Sigmoid colon (tissue), 7 donors: ENCODE measurements at regions of chr6 and their contacts with region 1.

Region 1: DNA sequence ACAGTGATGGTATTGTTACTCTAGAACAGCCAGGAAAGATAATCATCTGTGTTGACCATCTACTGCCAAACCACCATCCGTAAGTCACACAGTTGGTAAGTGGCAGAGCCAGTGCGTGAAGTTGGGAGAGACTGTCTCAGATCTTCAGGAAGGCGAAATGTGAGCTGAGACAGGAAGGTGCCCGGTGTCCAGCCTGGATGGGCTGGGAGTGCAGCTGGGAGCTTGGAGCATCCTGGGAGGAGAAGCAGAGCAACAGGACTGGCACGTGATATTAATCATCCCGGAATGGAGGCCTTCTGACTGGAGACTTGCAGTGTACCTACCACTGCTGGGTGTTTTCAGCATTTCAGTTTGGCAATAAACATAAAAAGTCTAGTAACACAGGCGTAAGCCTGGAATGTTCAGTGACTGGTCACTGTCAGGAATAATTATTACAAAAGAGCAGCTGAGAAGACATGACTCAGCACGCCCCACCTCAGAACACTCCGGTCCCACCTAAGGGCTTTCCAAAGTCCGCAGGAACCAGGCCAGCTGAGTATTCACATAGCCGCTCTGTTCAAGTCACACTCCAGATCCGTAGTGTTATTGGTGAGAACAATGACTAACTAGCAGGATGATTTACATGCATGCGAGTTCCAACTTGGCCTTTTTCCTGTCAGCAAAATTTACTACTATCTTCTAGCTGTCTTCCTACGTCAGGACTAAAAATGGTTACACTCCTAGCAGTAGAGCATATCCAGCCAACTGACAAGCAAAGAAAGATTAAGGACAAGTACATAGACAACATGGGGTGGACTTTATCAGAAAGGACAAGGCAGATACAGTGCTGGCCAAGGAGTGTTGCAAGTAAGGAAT is 45.1 kb upstream of the PNRC1 start:
- DNase-seq: peak; percentile 99
- H3K4me3 ChIP-seq: peak overlapping the region in 3 of 4 donors; percentile 11 to 18 (median 18)
- H3K27ac ChIP-seq: peak overlapping the region; percentile 90 to 94 (median 92)
- H3K4me1 ChIP-seq: peaks cover 2 to 45% (median 40%) of the 10 kb centered on the region in 4 donors
- H3K27me3 ChIP-seq: no peaks in the 10 kb centered on the region
- CTCF ChIP-seq: no peak
- EP300 ChIP-seq: peak; percentile 97 to 99 (median 98)
- POLR2A ChIP-seq: no peak

Region 2: DNA sequence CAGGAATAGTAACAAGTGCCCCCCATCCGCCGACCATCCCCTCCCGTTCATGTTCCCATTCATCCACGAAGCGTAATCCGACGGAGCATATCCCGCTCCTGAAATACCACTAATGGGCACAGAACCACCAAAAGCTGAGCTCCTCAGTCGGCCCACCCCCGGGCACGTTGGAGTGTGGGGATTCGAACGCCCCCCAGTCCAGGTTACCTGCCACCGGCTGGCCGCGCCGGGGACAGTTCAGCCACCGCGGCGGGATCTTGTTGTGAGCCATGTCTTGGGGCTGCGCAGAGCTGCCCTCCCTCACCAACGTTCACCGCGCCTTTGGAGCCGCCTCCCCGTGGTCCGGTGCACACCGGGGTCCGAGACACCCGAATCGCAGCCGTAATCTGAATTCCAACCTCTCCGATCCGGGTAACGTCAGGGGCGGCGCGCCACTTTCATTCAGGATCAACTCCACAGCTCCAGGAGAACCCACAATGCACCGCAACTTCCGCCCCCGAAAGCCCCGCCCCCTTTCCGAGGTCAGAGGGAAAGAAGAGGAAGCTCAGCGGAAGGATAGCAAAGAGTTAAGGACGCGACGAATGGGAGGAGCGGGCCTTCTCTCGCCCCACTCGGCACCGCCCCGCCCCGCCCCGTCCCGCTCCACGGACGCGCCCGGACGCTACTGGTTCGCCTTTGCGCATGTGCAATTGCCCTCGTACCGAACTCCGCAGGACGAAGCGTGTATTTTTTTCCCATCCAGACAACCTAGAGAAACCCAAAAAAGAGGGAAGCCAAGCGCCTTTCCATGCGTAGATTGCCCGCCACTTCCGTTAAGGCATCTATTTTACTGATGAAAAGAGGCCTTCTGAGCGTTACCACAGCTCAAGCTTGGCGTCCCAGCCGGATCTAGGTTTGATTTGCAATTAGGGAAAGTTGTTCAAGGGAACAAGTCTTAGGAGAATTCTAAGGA is 72.1 kb before region 1 on chr6 and contains the start of gene RNGTT:
- intact Hi-C with region 1: loop called (anchors 5 kb)
- DNase-seq: peak; percentile 99
- H3K4me3 ChIP-seq: peak within 1 kb of the TSS; percentile 87 to 93 (median 90)
- H3K27ac ChIP-seq: peak within 1 kb of the TSS; percentile 87 to 89 (median 87)
- H3K4me1 ChIP-seq: peaks cover 0 to 26% (median 21%) of the 10 kb centered on the region in 4 donors
- H3K27me3 ChIP-seq: no peaks in the 10 kb centered on the region
- CTCF ChIP-seq: no peak
- EP300 ChIP-seq: peak in 1 of 4 donors; percentile 70
- POLR2A ChIP-seq: peak in 1 of 2 donors; percentile 40
- total RNA-seq, gene RNGTT: 10.0 to 14.7 (median 12.9) TPM

Region 3: DNA sequence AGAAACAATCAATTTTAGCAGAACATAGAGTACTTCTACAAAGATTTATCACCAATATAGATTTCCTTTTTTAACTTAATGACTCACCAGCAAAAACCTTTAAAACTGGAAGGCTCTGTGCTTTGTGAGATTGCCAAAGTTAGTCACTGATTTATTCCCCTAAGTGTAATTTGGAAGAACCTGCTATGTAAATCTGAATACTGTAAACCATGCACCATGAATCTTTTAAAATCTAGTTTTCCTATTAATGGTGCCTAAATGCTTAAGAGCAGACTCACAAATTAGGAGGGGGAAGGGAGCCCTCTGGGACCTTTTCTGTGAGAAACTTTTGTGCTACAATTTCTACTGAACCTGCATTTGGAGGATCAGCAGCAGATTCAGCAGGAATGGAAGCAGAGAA is 12.7 kb before region 1 on chr6:
- intact Hi-C with region 1: loop called (anchors 1 kb)
- DNase-seq: no peak
- H3K4me3 ChIP-seq: no peak overlapping the region
- H3K27ac ChIP-seq: peak overlapping the region; percentile 78 to 89 (median 84)
- H3K4me1 ChIP-seq: peaks cover 0 to 43% (median 41%) of the 10 kb centered on the region in 4 donors
- H3K27me3 ChIP-seq: no peaks in the 10 kb centered on the region
- CTCF ChIP-seq: no peak
- EP300 ChIP-seq: peak; percentile 60 to 97 (median 95)
- POLR2A ChIP-seq: no peak

Region 4: GRCh38 chr6:89080542-89081422 is 45.3 kb after region 1 on chr6 and contains the start of gene PNRC1:
- intact Hi-C with region 1: loop called (anchors 1 kb)
- DNase-seq: peak; percentile 100
- H3K4me3 ChIP-seq: peak within 1 kb of the TSS; percentile 100
- H3K27ac ChIP-seq: peak within 1 kb of the TSS; percentile 100
- H3K4me1 ChIP-seq: peaks cover 0 to 37% (median 30%) of the 10 kb centered on the region in 4 donors
- H3K27me3 ChIP-seq: no peaks in the 10 kb centered on the region
- CTCF ChIP-seq: no peak
- EP300 ChIP-seq: peak in 1 of 4 donors; percentile 66
- POLR2A ChIP-seq: peak; percentile 99
- total RNA-seq, gene PNRC1: 211 to 349 (median 300) TPM

Region 5: DNA sequence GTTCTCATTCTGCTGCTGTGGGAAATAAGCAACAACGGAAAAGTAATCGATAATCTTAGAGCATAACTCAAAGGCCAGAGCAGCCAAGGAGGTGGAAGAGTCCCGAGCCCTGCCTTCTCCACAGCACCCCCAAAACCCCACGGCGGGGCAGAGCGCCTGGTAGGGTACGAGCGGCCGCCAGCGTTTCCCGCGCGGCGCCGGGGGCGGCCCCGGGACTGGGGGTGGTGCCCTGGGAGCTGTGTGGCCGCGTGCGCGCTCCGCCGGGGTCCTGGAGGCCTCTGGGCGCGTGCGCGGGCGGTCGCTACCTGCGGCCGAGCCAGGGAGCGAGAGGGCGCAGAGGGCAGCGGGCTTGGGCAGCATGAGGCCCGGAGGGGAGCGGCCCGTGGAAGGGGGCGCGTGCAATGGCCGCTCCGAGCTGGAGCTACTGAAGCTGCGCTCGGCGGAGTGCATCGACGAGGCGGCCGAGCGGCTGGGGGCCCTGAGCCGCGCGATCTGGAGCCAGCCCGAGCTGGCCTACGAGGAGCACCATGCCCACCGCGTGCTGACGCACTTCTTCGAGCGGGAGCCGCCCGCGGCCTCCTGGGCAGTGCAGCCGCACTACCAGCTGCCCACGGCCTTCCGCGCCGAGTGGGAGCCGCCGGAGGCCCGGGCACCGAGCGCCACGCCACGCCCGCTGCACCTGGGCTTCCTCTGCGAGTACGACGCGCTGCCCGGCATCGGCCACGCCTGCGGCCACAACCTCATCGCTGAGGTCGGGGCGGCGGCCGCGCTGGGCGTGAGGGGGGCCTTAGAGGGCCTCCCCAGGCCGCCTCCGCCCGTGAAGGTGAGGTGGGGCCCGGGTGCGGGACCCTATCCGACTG is 110.5 kb after region 1 on chr6 and contains the start of gene PM20D2:
- intact Hi-C with region 1: loop called (anchors 5 kb)
- DNase-seq: peak; percentile 83
- H3K4me3 ChIP-seq: peak within 1 kb of the TSS; percentile 75 to 91 (median 82)
- H3K27ac ChIP-seq: peak within 1 kb of the TSS; percentile 92 to 95 (median 93)
- H3K4me1 ChIP-seq: peaks cover 0 to 37% (median 31%) of the 10 kb centered on the region in 4 donors
- H3K27me3 ChIP-seq: no peaks in the 10 kb centered on the region
- CTCF ChIP-seq: no peak
- EP300 ChIP-seq: no peak
- POLR2A ChIP-seq: peak in 1 of 2 donors; percentile 19
- total RNA-seq, gene PM20D2: 20.3 to 48.5 (median 23.9) TPM

Region 6: DNA sequence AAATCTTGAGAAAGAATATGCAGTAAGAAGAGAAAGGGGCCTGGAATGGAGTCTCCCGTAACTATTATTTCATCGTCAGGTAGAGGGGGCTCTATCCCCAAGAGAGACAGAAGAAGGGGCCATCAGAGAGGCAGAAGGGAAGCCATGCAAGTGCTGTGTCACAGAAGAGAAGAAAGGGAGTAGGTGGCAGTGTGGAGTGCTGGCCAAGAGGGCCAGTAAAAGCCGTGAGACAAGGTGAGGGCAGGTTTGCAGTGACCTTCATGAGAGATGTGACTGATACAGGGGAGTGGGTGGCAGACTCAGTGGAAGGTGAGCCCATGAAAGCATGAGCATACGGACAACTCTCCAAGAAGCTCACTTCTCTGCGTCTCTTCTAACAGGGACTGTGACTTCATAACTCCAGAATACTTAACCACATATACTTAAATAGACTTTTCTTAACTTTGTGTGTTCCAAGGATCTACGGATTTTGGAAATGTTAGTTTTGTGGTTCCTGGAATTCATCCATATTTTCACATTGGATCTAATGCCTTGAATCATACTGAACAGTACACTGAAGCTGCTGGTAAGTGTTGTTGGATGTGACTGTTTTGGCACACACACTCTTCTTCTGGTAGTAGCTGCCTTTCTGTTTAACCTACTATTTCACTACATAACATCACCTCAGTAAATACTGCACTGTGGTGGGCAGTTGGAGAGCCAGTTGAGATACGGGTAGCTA is 126.0 kb after region 1 on chr6:
- intact Hi-C with region 1: loop called (anchors 1 kb)
- DNase-seq: no peak
- H3K4me3 ChIP-seq: peak overlapping the region in 2 of 4 donors; percentile 9 to 10
- H3K27ac ChIP-seq: peak overlapping the region; percentile 79 to 94 (median 86)
- H3K4me1 ChIP-seq: peaks cover 0 to 37% (median 34%) of the 10 kb centered on the region in 4 donors
- H3K27me3 ChIP-seq: no peaks in the 10 kb centered on the region
- CTCF ChIP-seq: no peak
- EP300 ChIP-seq: peak in 1 of 4 donors; percentile 35
- POLR2A ChIP-seq: no peak

Region 7: DNA sequence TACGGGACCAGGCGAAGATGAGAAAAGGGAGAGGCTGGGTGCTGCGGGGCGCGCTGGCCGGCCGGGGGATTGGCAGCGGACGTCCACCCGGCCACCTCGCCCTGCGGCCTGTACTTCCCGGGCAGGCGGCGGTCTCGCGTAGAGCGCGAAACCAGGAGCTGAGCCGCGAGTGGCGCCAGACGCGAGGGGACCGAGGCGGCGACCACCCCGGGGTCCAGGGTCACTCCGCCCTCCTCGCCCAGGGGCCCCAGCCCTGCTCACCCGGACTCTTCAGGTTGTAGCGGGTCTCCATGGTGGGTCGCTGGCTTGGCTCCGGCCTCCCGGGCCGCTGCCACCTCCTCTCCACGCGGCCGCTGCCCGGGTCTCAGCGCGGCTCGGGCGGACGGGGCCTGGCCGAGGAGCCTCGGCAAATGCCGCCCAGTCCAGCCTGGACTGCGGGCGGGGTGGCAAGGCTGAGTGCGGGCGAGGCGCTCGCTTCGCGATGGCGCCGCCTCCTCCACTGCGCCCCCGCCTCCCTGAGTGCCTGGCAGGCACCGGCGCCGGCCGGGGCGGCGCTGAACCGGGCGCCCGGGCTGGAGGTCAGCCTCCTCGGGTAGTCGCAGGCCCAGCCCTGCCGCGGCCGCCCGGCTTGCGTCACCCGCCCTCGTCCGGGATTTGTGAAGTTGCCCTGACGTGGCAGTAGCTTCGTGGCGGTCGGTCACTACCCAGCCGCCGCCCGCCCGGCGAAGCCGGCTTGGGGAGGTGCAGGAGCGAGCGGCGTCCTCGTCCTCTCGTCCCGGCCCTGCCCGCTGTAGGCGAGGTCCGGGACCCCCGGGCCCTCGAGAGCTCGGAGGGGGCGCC is 317.0 kb after region 1 on chr6 and contains the start of gene UBE2J1:
- intact Hi-C with region 1: loop called (anchors 5 kb)
- DNase-seq: peak; percentile 97
- H3K4me3 ChIP-seq: peak within 1 kb of the TSS; percentile 65 to 92 (median 72)
- H3K27ac ChIP-seq: peak within 1 kb of the TSS; percentile 94 to 99 (median 94)
- H3K4me1 ChIP-seq: peaks cover 0 to 40% (median 36%) of the 10 kb centered on the region in 4 donors
- H3K27me3 ChIP-seq: no peaks in the 10 kb centered on the region
- CTCF ChIP-seq: no peak
- EP300 ChIP-seq: no peak
- POLR2A ChIP-seq: peak; percentile 65 to 78
- total RNA-seq, gene UBE2J1: 29.5 to 36.7 (median 33.8) TPM